CD4-positive, alpha-beta T cell (primary cell): ENCODE measurements at regions of chr4 and their contacts with region 1.

Region 1: DNA sequence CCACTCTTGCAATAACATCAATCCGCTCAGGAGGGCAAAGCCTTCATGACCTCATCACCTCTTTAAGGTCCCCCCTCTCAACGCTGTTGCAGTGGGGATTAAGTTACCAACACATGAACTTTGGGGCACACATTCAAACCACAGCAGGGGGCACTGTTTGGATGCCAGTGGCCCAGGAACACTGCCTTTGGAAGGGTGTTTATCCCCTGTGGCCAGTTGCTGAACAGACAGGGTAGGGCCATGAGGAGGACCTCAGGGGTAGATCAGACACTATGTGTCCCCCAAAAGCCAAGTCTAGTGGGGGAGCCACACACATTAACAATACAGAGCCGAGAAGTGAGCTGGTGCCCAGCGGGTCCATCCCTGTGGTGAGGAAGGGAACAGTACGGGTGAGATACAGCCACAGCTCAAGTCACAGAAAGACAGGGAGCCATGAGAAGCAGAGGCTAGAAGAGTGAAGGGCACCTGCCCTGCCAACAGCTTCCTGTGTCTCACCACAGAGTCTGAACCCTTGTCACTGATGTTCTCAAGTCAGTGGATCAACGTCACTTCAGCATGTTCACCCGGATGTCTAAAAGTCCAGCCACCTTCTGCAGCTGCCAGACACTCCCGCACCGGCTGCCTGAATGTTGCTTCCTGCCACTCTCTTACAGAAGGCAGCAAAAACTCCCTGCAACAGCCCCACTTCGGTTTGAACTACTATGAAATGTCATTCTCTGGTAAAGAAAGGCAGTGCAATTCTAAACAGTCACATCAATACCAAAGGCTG is 19.9 kb upstream of the MXD4 start:
- DNase-seq: peak; percentile 74 to 97 (median 84)
- ATAC-seq: peak; percentile 87
- H3K4me3 ChIP-seq: peak overlapping the region; percentile 13
- H3K4me3 Mint-ChIP-seq: peak overlapping the region; percentile 78
- H3K27ac ChIP-seq: peak overlapping the region; percentile 87 to 96
- H3K27ac Mint-ChIP-seq: peak overlapping the region; percentile 95
- H3K4me1 ChIP-seq: peaks cover 57% of the 10 kb centered on the region
- H3K4me1 Mint-ChIP-seq: peaks cover 38% of the 10 kb centered on the region
- H3K27me3 ChIP-seq: no peaks in the 10 kb centered on the region
- H3K27me3 Mint-ChIP-seq: no peaks in the 10 kb centered on the region
- CTCF ChIP-seq: peak; percentile 25

Region 2: GRCh38 chr4:2271279-2272025 is 10.3 kb before region 1 on chr4:
- CTCF ChIA-PET with region 1: no interaction called
- POLR2A ChIA-PET with region 1: no interaction called
- intact Hi-C with region 1: no loop called
- DNase-seq: no peak
- ATAC-seq: no peak
- H3K4me3 ChIP-seq: no peak overlapping the region
- H3K4me3 Mint-ChIP-seq: no peak overlapping the region
- H3K27ac ChIP-seq: no peak overlapping the region
- H3K27ac Mint-ChIP-seq: no peak overlapping the region
- H3K4me1 ChIP-seq: no peaks in the 10 kb centered on the region
- H3K4me1 Mint-ChIP-seq: no peaks in the 10 kb centered on the region
- H3K27me3 ChIP-seq: no peaks in the 10 kb centered on the region
- H3K27me3 Mint-ChIP-seq: no peaks in the 10 kb centered on the region
- CTCF ChIP-seq: no peak

Region 3: DNA sequence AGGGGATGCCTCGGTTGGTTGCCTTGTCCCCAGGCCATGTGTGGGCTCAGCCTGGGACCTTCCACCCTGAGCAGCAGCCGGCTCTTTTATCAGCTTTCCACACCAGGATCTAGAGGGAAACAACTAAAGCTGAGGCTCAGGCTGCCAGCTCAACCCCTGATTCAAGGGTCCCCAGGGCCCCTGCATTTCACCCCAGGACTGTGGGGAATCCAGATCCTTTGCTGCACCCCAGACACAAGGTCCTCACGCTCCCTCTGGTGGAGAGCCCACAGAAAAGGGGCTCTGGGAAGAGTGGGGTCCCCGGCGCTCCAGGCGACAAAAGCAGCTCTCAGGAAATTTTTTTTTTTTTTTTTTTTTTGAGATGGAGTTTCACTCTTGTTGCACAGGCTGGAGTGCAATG is 72.4 kb after region 1 on chr4:
- CTCF ChIA-PET with region 1: interaction called, 6 read pairs
- POLR2A ChIA-PET with region 1: no interaction called
- intact Hi-C with region 1: loop called (anchors 1 to 5 kb)
- DNase-seq: peak; percentile 14 to 65 (median 29)
- ATAC-seq: peak; percentile 77
- H3K4me3 ChIP-seq: no peak overlapping the region
- H3K4me3 Mint-ChIP-seq: no peak overlapping the region
- H3K27ac ChIP-seq: no peak overlapping the region
- H3K27ac Mint-ChIP-seq: peak overlapping the region; percentile 51
- H3K4me1 ChIP-seq: peaks cover 6% of the 10 kb centered on the region
- H3K4me1 Mint-ChIP-seq: peaks cover 6% of the 10 kb centered on the region
- H3K27me3 ChIP-seq: no peaks in the 10 kb centered on the region
- H3K27me3 Mint-ChIP-seq: no peaks in the 10 kb centered on the region
- CTCF ChIP-seq: peak; percentile 45

Region 4: GRCh38 chr4:2462218-2462991 is 180.6 kb after region 1 on chr4:
- CTCF ChIA-PET with region 1: interaction called, 3 read pairs
- POLR2A ChIA-PET with region 1: no interaction called
- intact Hi-C with region 1: loop called in 1 of 2 experiments (anchors 5 kb)
- DNase-seq: peak; percentile 40 to 89 (median 60)
- ATAC-seq: peak; percentile 98
- H3K4me3 ChIP-seq: no peak overlapping the region
- H3K4me3 Mint-ChIP-seq: peak overlapping the region; percentile 85
- H3K27ac ChIP-seq: no peak overlapping the region
- H3K27ac Mint-ChIP-seq: no peak overlapping the region
- H3K4me1 ChIP-seq: peaks cover 18% of the 10 kb centered on the region
- H3K4me1 Mint-ChIP-seq: peaks cover 12% of the 10 kb centered on the region
- H3K27me3 ChIP-seq: peaks cover 0 to 5% of the 10 kb centered on the region in 2 experiments
- H3K27me3 Mint-ChIP-seq: no peaks in the 10 kb centered on the region
- CTCF ChIP-seq: peak; percentile 46

Region 5: DNA sequence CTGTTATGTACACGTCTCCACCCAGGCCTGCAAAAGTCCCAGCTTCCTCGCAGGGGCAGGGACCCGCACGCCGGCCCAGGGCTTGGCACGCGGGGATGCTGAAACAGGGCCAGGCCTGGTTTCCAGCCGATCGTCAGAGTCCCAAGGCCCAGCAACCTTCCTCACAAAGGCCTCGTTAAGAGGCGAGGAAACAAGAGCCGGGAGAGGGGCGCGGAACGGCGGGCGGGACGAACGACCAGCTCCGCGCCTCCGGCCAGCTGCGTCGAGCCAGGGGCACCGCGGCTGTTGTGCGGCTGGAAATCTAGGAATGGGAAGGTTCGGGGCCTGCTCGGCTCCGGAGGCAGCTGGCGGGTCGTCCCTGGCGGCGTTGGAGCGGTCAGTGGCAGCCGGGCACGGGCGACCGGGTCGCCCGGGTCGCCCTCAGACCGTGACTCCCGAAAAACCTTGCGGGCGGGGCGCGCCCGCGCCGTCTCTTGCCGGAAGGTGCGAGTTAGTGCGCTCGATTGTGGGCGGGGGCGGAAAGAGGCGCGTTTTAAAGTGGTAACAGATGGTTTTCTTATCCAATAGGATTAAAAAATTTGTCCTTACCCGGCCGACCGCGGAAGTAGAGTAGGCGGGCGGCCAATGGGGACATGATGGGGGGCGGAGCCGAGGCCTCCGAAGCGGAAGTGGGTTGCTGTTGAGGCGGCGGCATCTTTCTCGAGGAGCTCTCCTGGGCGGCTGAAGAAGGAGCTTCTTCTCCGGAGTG is 186.9 kb after region 1 on chr4 and contains the start of gene RNF4:
- CTCF ChIA-PET with region 1: no interaction called
- POLR2A ChIA-PET with region 1: interaction called, 15 read pairs
- intact Hi-C with region 1: loop called (anchors 2 to 5 kb)
- DNase-seq: peak; percentile 89 to 98 (median 94)
- ATAC-seq: peak; percentile 84
- H3K4me3 ChIP-seq: peak within 1 kb of the TSS; percentile 98
- H3K4me3 Mint-ChIP-seq: peak within 1 kb of the TSS; percentile 94
- H3K27ac ChIP-seq: peak within 1 kb of the TSS; percentile 96 to 97
- H3K27ac Mint-ChIP-seq: peak within 1 kb of the TSS; percentile 94
- H3K4me1 ChIP-seq: peaks cover 48% of the 10 kb centered on the region
- H3K4me1 Mint-ChIP-seq: peaks cover 48% of the 10 kb centered on the region
- H3K27me3 ChIP-seq: no peaks in the 10 kb centered on the region
- H3K27me3 Mint-ChIP-seq: no peaks in the 10 kb centered on the region
- CTCF ChIP-seq: no peak
- total RNA-seq, gene RNF4: 106 to 109 TPM